Activated T-helper 1 cell treated with anti-CD3 and anti-CD28 coated beads, Interleukin-12 subunit alpha, Interleukin-12 subunit beta, Interleukin-2, Interleukin-4 antibody, amounts not matched to agents 30 ng/mL and 10 ng/mL and 1 ng/mL, durations not matched to agents 14 hours and 24 hours and 36 hours (primary cell): ENCODE measurements at regions of chr10 and their contacts with region 1.

Region 1: DNA sequence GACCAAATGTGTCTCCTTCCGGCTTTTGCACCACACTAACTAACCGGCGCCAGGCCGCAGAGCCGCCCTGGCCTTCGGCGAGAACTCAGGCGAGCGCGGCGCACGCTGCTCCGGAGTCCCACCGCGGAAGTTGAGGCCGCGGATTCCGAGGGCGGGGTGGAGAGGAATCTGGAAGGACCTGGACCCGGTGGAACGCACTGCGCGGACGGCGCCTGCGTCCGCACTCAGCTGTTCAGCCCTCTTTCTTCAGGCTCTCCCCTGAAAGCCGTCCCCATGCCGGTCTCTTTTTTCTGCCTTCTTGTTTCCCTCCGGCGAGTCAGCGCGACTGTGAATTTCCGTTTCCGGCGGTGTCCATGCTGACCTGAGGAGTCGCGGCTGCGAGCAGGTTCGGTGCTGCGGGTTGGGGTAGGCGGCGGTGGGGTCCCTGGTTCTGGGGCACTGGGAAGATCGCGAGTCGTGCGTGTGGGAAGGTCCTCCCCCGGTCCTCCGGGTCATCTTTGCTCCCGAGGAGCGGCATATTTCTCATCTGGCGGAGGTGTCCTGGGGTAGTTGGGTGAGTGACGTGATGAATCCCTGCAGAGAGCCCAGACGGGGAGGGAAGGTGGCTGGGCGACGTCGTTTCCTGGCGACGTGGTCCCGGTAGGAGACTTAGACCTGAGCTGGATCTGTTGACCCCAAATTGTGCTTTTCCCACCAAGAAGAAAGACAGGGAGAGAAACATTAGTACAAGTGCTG is at the start of gene BMS1:
- DNase-seq: peak; percentile 88
- H3K4me3 Mint-ChIP-seq: peak within 1 kb of the TSS; percentile 99
- H3K27ac Mint-ChIP-seq: peak within 1 kb of the TSS; percentile 100
- H3K4me1 Mint-ChIP-seq: peaks cover 17% of the 10 kb centered on the region
- H3K27me3 Mint-ChIP-seq: peaks cover 1% of the 10 kb centered on the region
- total RNA-seq, gene BMS1: 35.6 and 36.5 TPM in 2 replicates

Region 2: GRCh38 chr10:42552493-42553407 is 229.9 kb before region 1 on chr10:
- intact Hi-C with region 1: loop called (anchors 1 kb)
- DNase-seq: peak; percentile 94
- H3K4me3 Mint-ChIP-seq: peak overlapping the region; percentile 99
- H3K27ac Mint-ChIP-seq: peak overlapping the region; percentile 98
- H3K4me1 Mint-ChIP-seq: peaks cover 38% of the 10 kb centered on the region
- H3K27me3 Mint-ChIP-seq: no peaks in the 10 kb centered on the region

Region 3: DNA sequence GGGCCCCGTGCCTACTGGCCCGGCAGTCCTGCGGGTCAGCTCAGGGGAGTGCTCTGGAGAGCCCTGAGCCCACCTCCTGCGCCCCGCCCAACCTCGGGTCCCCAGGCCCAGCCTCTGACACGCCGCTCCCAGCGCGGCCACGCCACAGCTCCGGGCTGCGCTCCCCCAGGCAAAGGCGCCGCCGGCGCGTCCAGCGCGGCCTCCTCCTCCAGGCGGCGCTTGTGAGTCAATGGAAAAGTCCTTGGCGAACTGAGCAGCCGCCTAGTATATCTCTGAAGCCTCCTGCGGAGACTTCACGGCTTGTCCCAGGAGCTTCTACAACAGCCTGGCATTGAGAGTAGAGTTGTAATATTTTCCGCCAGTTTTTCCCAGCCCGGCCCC is 29.5 kb before region 1 on chr10:
- intact Hi-C with region 1: loop called (anchors 1 kb)
- DNase-seq: peak; percentile 55
- H3K4me3 Mint-ChIP-seq: peak overlapping the region; percentile 45
- H3K27ac Mint-ChIP-seq: no peak overlapping the region
- H3K4me1 Mint-ChIP-seq: peaks cover 5% of the 10 kb centered on the region
- H3K27me3 Mint-ChIP-seq: peaks cover 54% of the 10 kb centered on the region

Region 4: DNA sequence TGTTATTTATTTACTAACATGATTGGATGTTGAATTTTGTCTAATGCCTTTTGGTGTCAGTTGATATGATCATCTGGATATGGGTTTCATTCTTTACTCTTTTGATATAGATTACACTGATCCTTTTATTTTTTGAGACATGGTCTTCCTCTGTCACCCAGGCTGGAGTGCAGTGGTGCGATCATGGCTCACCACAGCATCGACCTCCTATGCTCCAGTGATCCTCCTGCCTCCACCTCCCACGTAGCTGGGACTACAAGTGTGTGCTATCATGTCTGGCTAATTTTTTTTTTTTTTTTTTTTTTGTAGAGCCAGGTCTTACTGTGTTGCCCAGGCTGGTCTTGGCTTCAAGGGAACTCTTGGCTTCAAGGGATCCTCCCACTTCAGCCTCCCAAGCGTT is 27.1 kb after region 1 on chr10:
- intact Hi-C with region 1: no loop called
- DNase-seq: no peak
- H3K4me3 Mint-ChIP-seq: no peak overlapping the region
- H3K27ac Mint-ChIP-seq: no peak overlapping the region
- H3K4me1 Mint-ChIP-seq: peaks cover 8% of the 10 kb centered on the region
- H3K27me3 Mint-ChIP-seq: no peaks in the 10 kb centered on the region

Region 5: GRCh38 chr10:43128958-43129706 is 346.5 kb after region 1 on chr10:
- intact Hi-C with region 1: loop called (anchors 5 kb)
- DNase-seq: peak; percentile 57
- H3K4me3 Mint-ChIP-seq: peak overlapping the region; percentile 40
- H3K27ac Mint-ChIP-seq: peak overlapping the region; percentile 67
- H3K4me1 Mint-ChIP-seq: peaks cover 85% of the 10 kb centered on the region
- H3K27me3 Mint-ChIP-seq: no peaks in the 10 kb centered on the region

Region 6: GRCh38 chr10:43436400-43437140 is 654.0 kb after region 1 on chr10 and contains the start of gene ZNF487:
- intact Hi-C with region 1: loop called (anchors 2 kb)
- DNase-seq: peak; percentile 91
- H3K4me3 Mint-ChIP-seq: peak within 1 kb of the TSS; percentile 88
- H3K27ac Mint-ChIP-seq: peak within 1 kb of the TSS; percentile 94
- H3K4me1 Mint-ChIP-seq: peaks cover 11% of the 10 kb centered on the region
- H3K27me3 Mint-ChIP-seq: no peaks in the 10 kb centered on the region
- total RNA-seq, gene ZNF487: 1.8 and 2.0 TPM in 2 replicates